A549 (cell line): ENCODE measurements at regions of chr11 and their contacts with region 1.

Region 1: DNA sequence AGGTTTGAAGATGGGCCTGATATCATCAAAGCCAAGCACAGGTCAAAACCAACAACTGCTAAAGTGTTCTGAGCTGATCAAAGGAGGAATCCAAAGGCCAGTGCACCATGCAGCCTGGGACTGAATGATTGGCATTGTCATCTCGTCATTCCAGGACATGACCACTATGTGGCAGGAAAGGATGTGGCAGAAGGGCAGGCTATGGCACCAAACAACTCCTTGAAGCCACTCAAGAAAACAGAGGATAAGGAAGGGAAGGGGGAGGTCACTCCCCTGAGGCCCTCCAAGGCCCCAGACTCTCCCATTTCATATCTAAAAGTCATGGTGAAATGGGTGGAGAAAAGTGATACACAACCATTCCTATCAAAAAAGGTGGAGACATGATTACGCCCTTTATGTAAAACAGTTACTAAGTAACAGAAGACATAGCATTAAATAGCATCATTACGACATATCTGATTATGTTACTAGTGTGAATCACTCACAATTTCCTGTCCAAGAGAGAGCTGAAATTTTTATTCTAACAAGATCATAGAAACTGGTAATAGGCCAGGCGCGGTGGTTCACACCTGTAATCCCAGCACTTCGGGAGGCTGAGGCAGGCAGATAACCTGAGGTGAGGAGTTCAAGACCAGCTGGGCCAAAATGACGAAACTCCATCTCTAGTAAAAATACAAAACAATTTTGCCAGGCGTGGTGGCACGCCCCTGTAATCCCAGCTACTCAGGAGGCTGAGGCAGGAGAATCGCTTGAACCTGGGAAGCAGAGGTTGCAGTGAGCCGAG is 49.3 kb downstream of the AHNAK start:
- DNase-seq: peak; percentile 75 to 85
- ATAC-seq: peak; percentile 91 to 96
- H3K4me3 ChIP-seq: no peak overlapping the region
- H3K27ac ChIP-seq: peak overlapping the region; percentile 21 to 65; a peak in 4 of 6 replicates
- H3K4me1 ChIP-seq: peaks cover 29% of the 10 kb centered on the region
- CTCF ChIP-seq: peak; percentile 71
- EP300 ChIP-seq: no peak
- POLR2A ChIP-seq: no peak
- RAD21 ChIP-seq: peak; percentile 82 to 84

Region 2: GRCh38 chr11:62508268-62509058 is 11.1 kb after region 1 on chr11:
- CTCF ChIA-PET with region 1: interaction called, 39 read pairs
- POLR2A ChIA-PET with region 1: no interaction called
- DNase-seq: peak; percentile 88 to 89
- ATAC-seq: peak; percentile 94 to 98
- H3K4me3 ChIP-seq: 0 out of 3 replicates have a peak overlapping the region, but pooled peaks have one; percentile 16
- H3K27ac ChIP-seq: peak overlapping the region; percentile 82 to 86
- H3K4me1 ChIP-seq: peaks cover 63% of the 10 kb centered on the region
- CTCF ChIP-seq: peak; percentile 50
- EP300 ChIP-seq: no peak
- POLR2A ChIP-seq: no peak
- RAD21 ChIP-seq: peak; percentile 22 to 47; a peak in 2 of 5 replicates